ENCODE measurements at regions of chr5 and their contacts with region 1.

Region 1: DNA sequence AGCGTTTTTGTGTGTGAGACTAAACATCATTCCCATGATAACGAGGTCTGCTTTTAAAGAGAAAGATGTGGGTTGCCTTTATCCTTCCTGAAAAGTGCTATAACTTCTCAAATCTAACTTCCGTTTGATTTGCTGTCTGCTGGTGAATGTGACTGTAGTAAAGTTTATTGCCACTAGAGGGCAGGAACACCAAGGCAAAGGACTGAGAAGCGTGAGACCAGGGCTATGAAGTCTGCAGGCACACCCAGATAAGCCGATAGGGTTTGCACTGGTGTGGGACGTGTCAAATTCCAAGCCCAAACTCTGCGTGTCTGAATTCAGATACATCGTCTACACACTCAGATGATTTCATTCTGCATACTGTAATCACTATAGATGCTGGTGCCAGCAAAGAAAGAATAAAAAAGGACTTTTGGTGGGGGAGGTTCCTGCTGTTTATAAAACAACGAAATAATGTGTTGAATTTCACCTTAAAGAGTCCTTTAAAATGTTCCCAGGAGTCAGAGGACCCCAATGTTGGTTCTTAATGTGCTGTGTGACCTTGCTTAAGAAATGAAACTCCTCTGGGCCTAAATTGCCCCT is 87.2 kb downstream of the PTTG1 start:
- DNase-seq: peak; percentile 44 to 63
- H3K4me3 ChIP-seq: no peak overlapping the region
- H3K27ac ChIP-seq: no peak overlapping the region
- H3K4me1 ChIP-seq: 0 out of 7 replicates have a peak, but pooled peaks cover 0 to 5% (median 1%) of the 10 kb centered on the region in 4 experiments
- H3K27me3 ChIP-seq: no peaks in the 10 kb centered on the region
- CTCF ChIP-seq: peak; percentile 39 to 90 (median 87)
- EP300 ChIP-seq: no peak
- POLR2A ChIP-seq: no peak
- RAD21 ChIP-seq: peak; percentile 99 to 100

Region 2: DNA sequence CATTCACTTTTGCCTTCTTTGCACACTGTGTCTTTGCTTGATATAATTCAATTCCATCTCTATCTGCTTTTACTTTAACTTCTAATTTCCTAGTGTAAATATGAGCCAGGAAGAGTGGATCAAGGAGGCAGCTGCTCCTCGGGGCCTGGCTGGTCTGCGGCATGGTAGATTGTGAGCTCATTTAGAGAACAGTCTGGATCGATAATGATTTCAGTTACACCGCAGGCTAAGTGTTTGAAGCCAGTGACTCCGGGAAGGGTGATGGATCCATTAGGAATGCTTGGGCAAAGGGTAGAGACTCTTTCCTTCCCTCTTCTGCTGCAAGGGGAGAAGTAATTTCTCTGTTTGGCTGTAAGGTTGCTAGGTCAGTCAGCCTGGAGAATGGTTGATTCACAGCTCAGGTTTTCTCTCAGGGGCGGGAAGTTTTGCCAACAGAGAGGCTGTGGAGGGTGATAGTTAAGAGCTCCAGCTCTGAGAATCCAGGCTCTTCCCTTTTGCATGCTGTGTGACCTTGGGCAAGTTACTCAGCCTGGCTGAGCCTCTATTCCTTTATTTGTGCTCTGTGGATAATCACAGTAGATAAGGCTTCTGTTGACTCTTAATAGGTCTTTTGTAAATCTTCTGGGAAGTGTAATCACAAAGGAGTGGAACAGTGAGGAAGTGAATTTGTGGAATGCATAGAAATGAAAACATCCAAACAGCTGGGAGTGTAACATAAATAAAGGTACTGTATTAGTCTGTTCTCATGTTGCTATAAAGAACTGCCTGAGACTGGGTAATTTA is 11.9 kb after region 1 on chr5:
- CTCF ChIA-PET with region 1: interaction called, 13 read pairs
- POLR2A ChIA-PET with region 1: interaction called, 3 read pairs
- DNase-seq: no peak
- H3K4me3 ChIP-seq: no peak overlapping the region
- H3K27ac ChIP-seq: no peak overlapping the region
- H3K4me1 ChIP-seq: no peaks in the 10 kb centered on the region
- H3K27me3 ChIP-seq: no peaks in the 10 kb centered on the region
- CTCF ChIP-seq: no peak
- EP300 ChIP-seq: no peak
- POLR2A ChIP-seq: no peak
- RAD21 ChIP-seq: no peak

Region 3: GRCh38 chr5:160537940-160538339 is 29.1 kb after region 1 on chr5:
- CTCF ChIA-PET with region 1: interaction called, 12 read pairs
- POLR2A ChIA-PET with region 1: no interaction called
- DNase-seq: no peak
- H3K4me3 ChIP-seq: no peak overlapping the region
- H3K27ac ChIP-seq: no peak overlapping the region
- H3K4me1 ChIP-seq: peaks cover 0 to 3% (median 2%) of the 10 kb centered on the region in 4 experiments; a peak in 2 of 7 replicates
- H3K27me3 ChIP-seq: no peaks in the 10 kb centered on the region
- CTCF ChIP-seq: no peak
- EP300 ChIP-seq: no peak
- POLR2A ChIP-seq: no peak
- RAD21 ChIP-seq: no peak

Measured in H1 (cell line).